ENCODE measurements at regions of chr16 and their contacts with region 1.

Region 1: GRCh38 chr16:87853411-87854052 is 15.8 kb downstream of the SLC7A5 start:
- DNase-seq: peak; percentile 94
- ATAC-seq: peak; percentile 66
- H3K4me3 Mint-ChIP-seq: peak overlapping the region; percentile 14; the same call in 1 of the 2 replicates
- H3K27ac Mint-ChIP-seq: peak overlapping the region; percentile 93
- H3K4me1 Mint-ChIP-seq: peaks cover 38% of the 10 kb centered on the region
- H3K27me3 Mint-ChIP-seq: no peaks in the 10 kb centered on the region
- CTCF ChIP-seq: no peak

Region 2: GRCh38 chr16:86834451-86835035 is 1019.0 kb before region 1 on chr16:
- CTCF ChIA-PET with region 1: no interaction called
- POLR2A ChIA-PET with region 1: no interaction called
- DNase-seq: peak; percentile 60
- ATAC-seq: peak; percentile 92
- H3K4me3 Mint-ChIP-seq: no peak overlapping the region
- H3K27ac Mint-ChIP-seq: peak overlapping the region; percentile 76
- H3K4me1 Mint-ChIP-seq: peaks cover 2% of the 10 kb centered on the region; the same call in 1 of the 2 replicates
- H3K27me3 Mint-ChIP-seq: no peaks in the 10 kb centered on the region; the same call in 1 of the 2 replicates
- CTCF ChIP-seq: no peak

Region 3: DNA sequence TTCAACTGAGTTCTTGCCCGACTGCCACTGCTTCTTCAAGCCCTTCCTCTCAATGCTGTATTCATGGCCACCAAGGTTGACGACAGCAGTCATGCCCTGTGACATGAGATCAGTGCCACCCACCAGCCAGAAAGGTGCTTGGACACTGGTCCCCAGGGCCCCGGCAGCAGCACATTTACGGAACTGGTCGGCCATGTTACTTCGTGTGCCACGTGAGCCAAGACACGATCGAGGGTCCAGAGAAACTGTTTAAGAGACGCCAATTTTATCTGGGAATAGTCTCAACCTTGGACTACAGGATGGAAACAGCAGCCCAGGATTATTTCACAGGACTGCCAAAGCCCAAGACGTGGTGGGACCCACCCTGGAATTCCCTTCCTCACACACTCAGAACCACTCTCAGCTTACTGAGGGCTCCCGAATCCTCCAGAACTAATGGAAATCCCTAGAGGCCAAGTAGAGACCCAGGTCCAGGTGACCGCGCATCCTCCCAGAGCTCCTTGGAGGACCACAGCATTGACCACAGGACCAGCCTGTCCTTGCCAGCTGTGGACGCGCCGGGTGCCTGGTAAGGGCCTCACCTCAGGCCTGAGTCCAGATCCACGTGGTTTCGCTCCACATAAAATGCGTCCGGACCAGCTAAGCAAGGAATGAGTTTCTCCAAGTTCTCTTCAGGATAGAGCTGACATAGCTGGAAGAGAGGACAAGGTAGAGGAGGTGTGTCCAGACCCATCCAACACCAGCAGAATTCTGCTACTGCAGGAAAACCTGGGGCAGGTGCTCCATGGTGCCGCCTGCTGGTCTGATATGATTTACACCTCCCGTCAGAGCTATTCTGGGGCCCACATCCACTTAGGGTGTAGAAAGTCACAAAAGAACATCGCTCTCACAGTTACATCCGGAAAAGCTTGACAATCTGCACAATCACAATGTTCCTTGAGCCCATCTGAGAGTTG is 433.2 kb before region 1 on chr16:
- CTCF ChIA-PET with region 1: no interaction called
- POLR2A ChIA-PET with region 1: no interaction called
- DNase-seq: peak; percentile 41
- ATAC-seq: peak; percentile 58
- H3K4me3 Mint-ChIP-seq: no peak overlapping the region
- H3K27ac Mint-ChIP-seq: no peak overlapping the region
- H3K4me1 Mint-ChIP-seq: peaks cover 15% of the 10 kb centered on the region
- H3K27me3 Mint-ChIP-seq: no peaks in the 10 kb centered on the region
- CTCF ChIP-seq: peak; percentile 30; the same call in 1 of the 2 replicates

Region 4: DNA sequence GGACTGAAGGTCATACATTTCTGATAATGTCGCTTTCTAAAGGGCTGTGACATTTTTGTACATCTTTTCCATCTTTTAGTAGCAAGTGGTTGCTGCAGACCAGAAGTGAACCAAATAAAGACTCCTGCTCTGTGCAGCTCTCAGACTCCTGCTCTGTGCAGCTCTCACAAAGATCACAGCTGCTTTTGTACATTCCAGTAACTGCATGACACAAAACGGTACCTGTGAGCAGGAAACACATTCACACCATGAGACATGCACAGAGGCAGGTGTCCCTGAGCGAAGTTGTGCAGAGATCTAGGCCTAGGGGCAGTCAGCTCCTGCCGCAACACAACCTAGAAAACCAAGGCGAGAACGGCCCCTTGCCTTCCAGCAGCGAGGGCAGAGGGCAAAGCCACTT is 155.3 kb before region 1 on chr16:
- CTCF ChIA-PET with region 1: no interaction called
- POLR2A ChIA-PET with region 1: no interaction called
- DNase-seq: no peak
- ATAC-seq: no peak
- H3K4me3 Mint-ChIP-seq: no peak overlapping the region
- H3K27ac Mint-ChIP-seq: peak overlapping the region; percentile 52
- H3K4me1 Mint-ChIP-seq: no peaks in the 10 kb centered on the region
- H3K27me3 Mint-ChIP-seq: no peaks in the 10 kb centered on the region
- CTCF ChIP-seq: no peak

Region 5: DNA sequence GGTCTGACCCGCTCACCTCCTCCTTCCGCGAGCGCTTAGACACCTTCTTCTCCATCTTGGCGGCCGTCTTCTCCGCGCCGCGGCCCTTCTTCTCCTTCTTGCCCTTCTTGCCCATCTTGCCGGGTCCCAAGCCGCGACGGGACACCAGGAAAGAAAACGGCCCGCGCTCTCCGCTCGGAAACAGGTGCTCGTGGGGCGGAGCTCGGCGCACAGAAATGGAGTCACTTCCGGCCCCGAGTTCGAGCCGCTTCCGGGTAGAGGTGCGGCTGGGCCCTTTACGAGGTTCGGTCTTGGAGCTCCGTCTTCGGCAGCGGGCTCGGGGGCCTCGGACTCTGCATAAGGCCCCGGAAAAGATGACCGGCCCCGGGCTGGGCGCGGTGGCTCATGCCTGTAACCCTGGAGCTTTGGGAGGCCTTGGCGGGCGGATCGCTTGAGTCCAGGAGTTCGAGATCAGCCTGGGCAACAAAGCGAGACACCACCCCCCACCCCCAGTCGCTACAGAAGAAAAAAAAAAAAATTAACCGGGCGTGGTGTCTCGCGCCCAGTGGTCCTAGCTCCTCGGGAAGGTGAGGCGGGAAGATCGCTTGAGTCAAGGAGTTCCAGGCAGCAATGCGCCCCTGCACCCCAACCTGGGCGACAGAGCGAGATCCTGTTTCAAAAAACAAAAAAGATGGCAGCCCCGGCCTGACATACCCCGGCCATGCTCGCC is 87.6 kb before region 1 on chr16 and contains the start of gene KLHDC4:
- CTCF ChIA-PET with region 1: interaction called, 12 read pairs
- POLR2A ChIA-PET with region 1: interaction called, 3 read pairs
- DNase-seq: peak; percentile 88
- ATAC-seq: peak; percentile 73
- H3K4me3 Mint-ChIP-seq: peak within 1 kb of the TSS; percentile 100
- H3K27ac Mint-ChIP-seq: peak within 1 kb of the TSS; percentile 95
- H3K4me1 Mint-ChIP-seq: peaks cover 6% of the 10 kb centered on the region; the same call in 1 of the 2 replicates
- H3K27me3 Mint-ChIP-seq: no peaks in the 10 kb centered on the region
- CTCF ChIP-seq: no peak
- total RNA-seq, gene KLHDC4: 60.0 to 63.6 TPM (median 60.5 TPM) in 3 replicates

Region 6: GRCh38 chr16:87822108-87822970 is 31.2 kb before region 1 on chr16:
- CTCF ChIA-PET with region 1: interaction called, 36 read pairs
- POLR2A ChIA-PET with region 1: interaction called, 4 read pairs
- DNase-seq: no peak
- ATAC-seq: peak; percentile 13; the same call in 1 of the 2 replicates
- H3K4me3 Mint-ChIP-seq: no peak overlapping the region
- H3K27ac Mint-ChIP-seq: 0 out of 2 replicates have a peak overlapping the region, but pooled peaks have one; percentile 65
- H3K4me1 Mint-ChIP-seq: peaks cover 64% of the 10 kb centered on the region
- H3K27me3 Mint-ChIP-seq: no peaks in the 10 kb centered on the region
- CTCF ChIP-seq: no peak

Region 7: GRCh38 chr16:87828071-87828971 is 25.2 kb before region 1 on chr16:
- CTCF ChIA-PET with region 1: interaction called, 36 read pairs
- POLR2A ChIA-PET with region 1: interaction called, 4 read pairs
- DNase-seq: no peak
- ATAC-seq: no peak
- H3K4me3 Mint-ChIP-seq: no peak overlapping the region
- H3K27ac Mint-ChIP-seq: no peak overlapping the region
- H3K4me1 Mint-ChIP-seq: peaks cover 53% of the 10 kb centered on the region
- H3K27me3 Mint-ChIP-seq: no peaks in the 10 kb centered on the region
- CTCF ChIP-seq: no peak

Region 8: GRCh38 chr16:87842209-87842869 is 11.2 kb before region 1 on chr16:
- CTCF ChIA-PET with region 1: interaction called, 17 read pairs
- POLR2A ChIA-PET with region 1: interaction called, 3 read pairs
- DNase-seq: no peak
- ATAC-seq: no peak
- H3K4me3 Mint-ChIP-seq: no peak overlapping the region
- H3K27ac Mint-ChIP-seq: peak overlapping the region; percentile 80
- H3K4me1 Mint-ChIP-seq: peaks cover 12% of the 10 kb centered on the region
- H3K27me3 Mint-ChIP-seq: no peaks in the 10 kb centered on the region
- CTCF ChIP-seq: no peak

Region 9: GRCh38 chr16:87877938-87878507 is 24.5 kb after region 1 on chr16:
- CTCF ChIA-PET with region 1: interaction called, 234 read pairs
- POLR2A ChIA-PET with region 1: interaction called, 4 read pairs
- DNase-seq: no peak
- ATAC-seq: no peak
- H3K4me3 Mint-ChIP-seq: no peak overlapping the region
- H3K27ac Mint-ChIP-seq: no peak overlapping the region
- H3K4me1 Mint-ChIP-seq: peaks cover 70% of the 10 kb centered on the region
- H3K27me3 Mint-ChIP-seq: no peaks in the 10 kb centered on the region
- CTCF ChIP-seq: no peak

Region 10: DNA sequence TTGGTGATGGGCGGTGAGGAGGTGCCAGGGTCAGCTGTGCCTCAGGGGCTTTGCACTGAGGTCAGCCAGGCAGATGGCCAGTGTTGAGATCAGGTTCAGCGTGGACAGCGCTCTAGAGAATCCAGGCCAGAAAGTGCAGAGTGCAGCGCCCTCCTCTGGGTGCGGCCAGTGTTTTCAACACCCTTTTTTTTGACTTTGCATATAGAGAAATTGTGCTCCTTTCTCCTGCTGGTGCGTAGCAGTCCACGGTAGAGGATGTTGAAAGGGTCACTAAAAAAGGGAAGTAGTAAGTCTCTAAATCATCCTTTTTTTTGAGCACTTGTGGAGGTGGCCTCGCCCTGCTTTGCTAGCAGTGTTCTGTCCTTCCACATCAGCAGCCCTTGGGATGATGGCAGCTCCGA is 151.6 kb after region 1 on chr16:
- CTCF ChIA-PET with region 1: no interaction called
- POLR2A ChIA-PET with region 1: no interaction called
- DNase-seq: peak; percentile 63
- ATAC-seq: peak; percentile 33
- H3K4me3 Mint-ChIP-seq: no peak overlapping the region
- H3K27ac Mint-ChIP-seq: peak overlapping the region; percentile 90
- H3K4me1 Mint-ChIP-seq: peaks cover 25% of the 10 kb centered on the region
- H3K27me3 Mint-ChIP-seq: no peaks in the 10 kb centered on the region
- CTCF ChIP-seq: peak; percentile 48

Measured in WTC11 (cell line).